GM12878 (cell line): ENCODE measurements at regions of chr1 and their contacts with region 1.

Region 1: GRCh38 chr1:159132271-159132881 is 39.0 kb upstream of the CADM3 start:
- DNase-seq: no peak
- ATAC-seq: peak; percentile 75
- H3K4me3 ChIP-seq: no peak overlapping the region
- H3K27ac ChIP-seq: no peak overlapping the region
- H3K4me1 ChIP-seq: no peaks in the 10 kb centered on the region
- H3K27me3 ChIP-seq: no peaks in the 10 kb centered on the region
- CTCF ChIP-seq: peak; percentile 79 to 90 (median 87)
- EP300 ChIP-seq: no peak
- POLR2A ChIP-seq: no peak
- RAD21 ChIP-seq: peak; percentile 82

Region 2: DNA sequence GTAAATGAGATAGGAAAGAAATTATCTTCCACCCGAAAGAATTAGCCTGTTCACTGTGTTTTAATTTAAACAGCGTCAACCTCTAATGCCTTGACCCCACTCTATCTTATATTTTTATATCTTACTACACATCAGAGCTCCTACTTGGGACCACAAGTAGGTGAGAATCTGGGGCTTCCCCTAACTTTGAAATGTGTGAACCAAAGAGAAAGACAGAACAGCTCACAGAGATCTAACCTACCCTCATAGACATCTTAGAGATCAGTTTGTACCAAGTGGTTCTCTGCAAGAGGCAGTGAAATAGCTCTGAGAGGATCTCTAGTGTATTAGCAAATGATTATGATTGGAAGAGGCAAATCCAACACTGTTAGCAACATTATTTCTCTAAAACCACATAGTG is 153.6 kb before region 1 on chr1:
- CTCF ChIA-PET with region 1: no interaction called
- POLR2A ChIA-PET with region 1: no interaction called
- RAD21 ChIA-PET with region 1: no interaction called
- SMC1A ChIA-PET with region 1: no interaction called
- in situ Hi-C with region 1: no loop called
- intact Hi-C with region 1: no loop called
- DNase-seq: no peak
- ATAC-seq: no peak
- H3K4me3 ChIP-seq: no peak overlapping the region
- H3K27ac ChIP-seq: no peak overlapping the region
- H3K4me1 ChIP-seq: no peaks in the 10 kb centered on the region
- H3K27me3 ChIP-seq: no peaks in the 10 kb centered on the region; a peak in 1 of 4 replicates
- CTCF ChIP-seq: no peak
- EP300 ChIP-seq: no peak
- POLR2A ChIP-seq: no peak
- RAD21 ChIP-seq: no peak

Region 3: GRCh38 chr1:159122005-159122621 is 10.3 kb before region 1 on chr1:
- CTCF ChIA-PET with region 1: interaction called, 13 read pairs
- POLR2A ChIA-PET with region 1: no interaction called
- RAD21 ChIA-PET with region 1: no interaction called
- SMC1A ChIA-PET with region 1: interaction called, 6 read pairs
- in situ Hi-C with region 1: no loop called
- intact Hi-C with region 1: no loop called
- DNase-seq: peak; percentile 19
- ATAC-seq: peak; percentile 87
- H3K4me3 ChIP-seq: no peak overlapping the region
- H3K27ac ChIP-seq: no peak overlapping the region
- H3K4me1 ChIP-seq: peaks cover 9% of the 10 kb centered on the region
- H3K27me3 ChIP-seq: peaks cover 2 to 11% of the 10 kb centered on the region in 2 experiments; a peak in 3 of 4 replicates
- CTCF ChIP-seq: no peak
- EP300 ChIP-seq: peak; percentile 79 to 82; a peak in 3 of 4 replicates
- POLR2A ChIP-seq: no peak
- RAD21 ChIP-seq: no peak

Region 4: GRCh38 chr1:159161001-159161718 is 28.8 kb after region 1 on chr1:
- CTCF ChIA-PET with region 1: interaction called, 11 read pairs
- POLR2A ChIA-PET with region 1: no interaction called
- RAD21 ChIA-PET with region 1: interaction called, 3 read pairs
- SMC1A ChIA-PET with region 1: interaction called, 3 read pairs
- in situ Hi-C with region 1: no loop called
- intact Hi-C with region 1: no loop called
- DNase-seq: peak; percentile 51
- ATAC-seq: peak; percentile 99
- H3K4me3 ChIP-seq: no peak overlapping the region
- H3K27ac ChIP-seq: no peak overlapping the region
- H3K4me1 ChIP-seq: peaks cover 3% of the 10 kb centered on the region; the same call in 1 of the 2 replicates
- H3K27me3 ChIP-seq: peaks cover 0 to 2% of the 10 kb centered on the region in 2 experiments; a peak in 1 of 4 replicates
- CTCF ChIP-seq: peak; percentile 94 to 100 (median 99); a peak in 5 of 6 replicates
- EP300 ChIP-seq: no peak
- POLR2A ChIP-seq: no peak
- RAD21 ChIP-seq: peak; percentile 100

Region 5: GRCh38 chr1:159197561-159198557 is 65.5 kb after region 1 on chr1:
- CTCF ChIA-PET with region 1: interaction called, 62 read pairs
- POLR2A ChIA-PET with region 1: no interaction called
- RAD21 ChIA-PET with region 1: interaction called, 5 read pairs
- SMC1A ChIA-PET with region 1: interaction called, 6 read pairs
- in situ Hi-C with region 1: no loop called
- intact Hi-C with region 1: loop called (anchors 5 kb)
- DNase-seq: no peak
- ATAC-seq: peak; percentile 96
- H3K4me3 ChIP-seq: no peak overlapping the region
- H3K27ac ChIP-seq: no peak overlapping the region
- H3K4me1 ChIP-seq: no peaks in the 10 kb centered on the region
- H3K27me3 ChIP-seq: peaks cover 0 to 2% of the 10 kb centered on the region in 2 experiments; a peak in 2 of 4 replicates
- CTCF ChIP-seq: peak; percentile 83 to 90 (median 88)
- EP300 ChIP-seq: no peak
- POLR2A ChIP-seq: no peak
- RAD21 ChIP-seq: peak; percentile 65

Region 6: DNA sequence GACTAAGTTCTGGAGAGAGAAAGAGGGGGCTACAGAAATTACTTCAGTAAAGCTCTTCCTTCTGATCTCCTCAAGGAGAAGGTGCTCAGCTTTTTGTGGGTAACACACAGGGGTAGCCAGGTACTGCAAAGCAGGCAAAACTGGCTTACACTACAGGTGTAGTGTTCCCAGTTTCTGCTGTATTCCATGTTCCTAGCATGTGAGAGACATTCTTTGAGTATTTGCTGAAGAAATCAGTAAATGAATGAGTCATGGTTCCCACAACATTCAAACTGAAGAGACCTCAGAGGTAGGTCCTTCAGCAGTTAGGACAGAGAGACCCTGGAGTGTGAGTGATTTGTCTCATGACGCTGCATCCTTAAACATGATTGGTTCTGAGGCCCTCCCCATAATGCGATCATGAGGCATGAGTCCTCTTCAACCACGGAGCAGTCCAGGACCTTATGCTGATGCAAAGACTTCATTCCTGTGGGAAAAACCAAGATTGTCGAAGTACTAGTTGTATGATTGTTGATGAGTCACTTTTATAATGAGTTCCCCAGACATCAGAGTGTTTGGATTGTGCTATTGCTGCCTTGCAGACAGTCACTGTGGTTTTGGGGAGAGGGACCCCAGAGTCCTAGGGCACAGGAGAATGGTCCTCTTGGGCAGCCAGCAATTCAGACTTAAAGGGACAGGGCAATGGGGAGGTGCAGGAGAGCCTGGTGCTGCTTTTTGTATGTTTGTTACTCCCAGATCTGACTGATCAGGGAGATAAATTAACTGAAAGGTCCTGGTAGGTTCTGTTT is 296.9 kb after region 1 on chr1:
- CTCF ChIA-PET with region 1: no interaction called
- POLR2A ChIA-PET with region 1: no interaction called
- RAD21 ChIA-PET with region 1: no interaction called
- SMC1A ChIA-PET with region 1: no interaction called
- in situ Hi-C with region 1: no loop called
- intact Hi-C with region 1: no loop called
- DNase-seq: no peak
- ATAC-seq: no peak
- H3K4me3 ChIP-seq: no peak overlapping the region
- H3K27ac ChIP-seq: no peak overlapping the region
- H3K4me1 ChIP-seq: no peaks in the 10 kb centered on the region
- H3K27me3 ChIP-seq: no peaks in the 10 kb centered on the region
- CTCF ChIP-seq: no peak
- EP300 ChIP-seq: no peak
- POLR2A ChIP-seq: no peak
- RAD21 ChIP-seq: no peak